Aorta (tissue), 5 donors: ENCODE measurements at regions of chr17 and their contacts with region 1.

Region 1: GRCh38 chr17:59859444-59860025 is 33.2 kb downstream of the TUBD1 start:
- DNase-seq: no peak
- ATAC-seq: no peak
- H3K4me3 ChIP-seq: no peak overlapping the region
- H3K27ac ChIP-seq: no peak overlapping the region
- H3K4me1 ChIP-seq: peaks cover 0 to 4% of the 10 kb centered on the region in 2 donors
- H3K27me3 ChIP-seq: no peaks in the 10 kb centered on the region

Region 2: GRCh38 chr17:59753522-59754467 is 105.7 kb before region 1 on chr17:
- intact Hi-C with region 1: loop called in 1 of 2 experiments (anchors 2 kb)
- DNase-seq: no peak
- ATAC-seq: peak; percentile 86
- H3K4me3 ChIP-seq: no peak overlapping the region
- H3K27ac ChIP-seq: no peak overlapping the region
- H3K4me1 ChIP-seq: peaks cover 2 to 4% of the 10 kb centered on the region in 2 donors
- H3K27me3 ChIP-seq: no peaks in the 10 kb centered on the region

Region 3: DNA sequence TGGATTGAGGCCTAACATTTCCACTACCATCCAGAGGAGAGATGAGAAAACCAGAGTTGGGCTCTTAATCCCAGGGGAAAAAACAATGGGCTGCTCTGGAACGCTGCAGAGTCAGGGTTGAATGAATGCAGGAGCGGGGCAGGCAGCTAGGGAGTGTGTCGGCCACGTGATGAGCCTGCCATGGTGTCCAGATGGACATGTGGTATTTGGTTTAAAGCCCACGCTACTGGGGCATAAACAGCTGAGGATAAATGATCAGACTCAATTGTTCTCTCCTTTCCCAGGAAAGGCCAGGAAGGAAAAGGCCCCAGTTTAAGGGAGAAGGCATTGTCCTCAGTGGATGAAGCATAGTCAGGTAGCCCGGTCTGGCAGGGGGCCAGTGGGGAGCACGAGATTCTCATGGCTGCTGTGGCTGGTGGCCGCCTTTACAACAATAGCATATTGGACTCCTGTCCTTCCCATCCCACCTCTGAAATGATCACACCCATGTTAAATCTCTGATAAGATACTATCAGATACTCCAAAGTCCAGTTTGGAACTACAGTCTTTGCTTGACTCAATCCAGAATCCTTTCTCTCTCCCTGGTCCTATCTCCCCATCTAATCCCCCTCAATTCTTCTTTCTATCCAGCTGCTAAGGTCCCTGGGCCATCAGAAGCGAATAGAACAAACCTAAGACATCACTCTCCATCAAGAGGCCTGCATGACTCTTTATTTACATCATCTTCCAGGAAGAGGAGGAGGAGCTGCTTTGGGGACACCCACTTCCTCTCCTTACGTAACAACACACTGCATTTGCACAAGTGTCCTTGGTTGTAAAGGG is 310.6 kb after region 1 on chr17:
- intact Hi-C with region 1: no loop called
- DNase-seq: no peak
- ATAC-seq: no peak
- H3K4me3 ChIP-seq: no peak overlapping the region
- H3K27ac ChIP-seq: no peak overlapping the region
- H3K4me1 ChIP-seq: no peaks in the 10 kb centered on the region
- H3K27me3 ChIP-seq: no peaks in the 10 kb centered on the region